A549 (cell line): ENCODE measurements at regions of chr17 and their contacts with region 1.

Region 1: GRCh38 chr17:80008383-80008840 is 27.3 kb downstream of the TBC1D16 start:
- DNase-seq: peak; percentile 77 to 91
- ATAC-seq: peak; percentile 78 to 91
- H3K4me3 ChIP-seq: no peak overlapping the region
- H3K27ac ChIP-seq: peak overlapping the region; percentile 7 to 16; a peak in 3 of 6 replicates
- H3K4me1 ChIP-seq: peaks cover 15% of the 10 kb centered on the region
- CTCF ChIP-seq: peak; percentile 89
- EP300 ChIP-seq: no peak
- POLR2A ChIP-seq: no peak
- RAD21 ChIP-seq: peak; percentile 64 to 65

Region 2: GRCh38 chr17:79612468-79613194 is 395.8 kb before region 1 on chr17:
- CTCF ChIA-PET with region 1: no interaction called
- POLR2A ChIA-PET with region 1: no interaction called
- DNase-seq: peak; percentile 92 to 94
- ATAC-seq: peak; percentile 67 to 89
- H3K4me3 ChIP-seq: no peak overlapping the region
- H3K27ac ChIP-seq: peak overlapping the region; percentile 88 to 95
- H3K4me1 ChIP-seq: peaks cover 37% of the 10 kb centered on the region
- CTCF ChIP-seq: peak; percentile 97
- EP300 ChIP-seq: no peak
- POLR2A ChIP-seq: no peak
- RAD21 ChIP-seq: peak; percentile 96 to 97

Region 3: DNA sequence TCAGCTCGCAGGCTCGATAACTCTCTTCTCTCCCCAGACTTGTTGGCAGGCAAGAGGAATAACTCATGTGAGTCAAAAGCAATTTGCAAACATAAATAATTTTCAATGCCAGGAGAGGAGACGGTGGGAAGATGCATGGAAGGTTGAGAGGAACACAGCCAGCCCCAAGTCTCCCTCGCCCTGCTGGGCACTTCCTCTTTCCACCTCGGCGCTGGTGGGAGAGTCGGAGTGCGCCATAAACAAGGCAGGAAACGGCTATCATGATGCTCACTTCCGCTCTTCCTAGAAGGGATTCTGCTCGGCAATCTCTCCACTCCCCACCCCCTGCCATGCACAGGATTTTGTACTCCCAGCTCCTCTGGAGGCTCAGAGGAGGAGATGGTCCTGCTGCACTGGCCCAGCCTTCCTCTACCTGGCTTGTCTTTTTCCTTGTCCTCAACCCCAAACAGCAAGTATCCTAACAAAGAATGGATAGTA is 182.2 kb before region 1 on chr17:
- CTCF ChIA-PET with region 1: interaction called, 10 read pairs
- POLR2A ChIA-PET with region 1: no interaction called
- DNase-seq: no peak
- ATAC-seq: no peak
- H3K4me3 ChIP-seq: no peak overlapping the region
- H3K27ac ChIP-seq: no peak overlapping the region
- H3K4me1 ChIP-seq: peaks cover 26% of the 10 kb centered on the region
- CTCF ChIP-seq: no peak
- EP300 ChIP-seq: no peak
- POLR2A ChIP-seq: no peak
- RAD21 ChIP-seq: no peak

Region 4: GRCh38 chr17:79947351-79948031 is 60.9 kb before region 1 on chr17:
- CTCF ChIA-PET with region 1: no interaction called
- POLR2A ChIA-PET with region 1: no interaction called
- DNase-seq: no peak
- ATAC-seq: no peak
- H3K4me3 ChIP-seq: no peak overlapping the region
- H3K27ac ChIP-seq: no peak overlapping the region
- H3K4me1 ChIP-seq: no peaks in the 10 kb centered on the region
- CTCF ChIP-seq: no peak
- EP300 ChIP-seq: no peak
- POLR2A ChIP-seq: no peak
- RAD21 ChIP-seq: no peak

Region 5: DNA sequence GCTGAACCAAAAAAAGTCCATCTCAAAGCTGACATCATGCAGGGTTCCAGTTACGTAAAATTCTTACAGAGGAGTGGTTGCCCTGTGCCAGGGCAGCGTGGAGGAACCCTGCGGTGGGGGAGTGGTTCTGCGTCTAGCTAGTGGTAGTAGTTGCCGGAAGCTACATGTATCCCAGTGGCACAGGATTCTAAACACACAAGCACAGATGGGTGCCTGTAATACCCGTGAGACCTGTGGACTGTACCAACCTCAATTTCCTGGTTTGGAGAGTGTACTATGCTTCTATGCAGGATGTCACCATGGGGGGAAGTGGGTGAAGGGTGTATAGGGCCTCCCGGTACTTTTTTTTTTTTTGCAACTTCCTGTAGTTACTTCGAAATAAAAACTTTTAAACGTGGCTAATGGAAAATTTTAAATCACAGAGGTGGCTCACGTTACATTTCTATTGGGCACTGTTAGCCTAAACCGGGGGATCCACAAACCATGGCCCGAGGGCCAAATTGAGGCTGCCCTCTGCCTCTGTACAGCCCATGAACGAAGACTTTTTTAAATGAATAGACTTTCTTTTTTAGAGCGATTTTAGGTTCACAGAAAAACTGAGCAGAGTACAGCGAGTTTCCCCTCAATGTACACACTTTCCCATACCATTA is 11.3 kb before region 1 on chr17:
- CTCF ChIA-PET with region 1: interaction called, 154 read pairs
- POLR2A ChIA-PET with region 1: interaction called, 3 read pairs
- DNase-seq: no peak
- ATAC-seq: no peak
- H3K4me3 ChIP-seq: no peak overlapping the region
- H3K27ac ChIP-seq: peak overlapping the region; percentile 28 to 48; a peak in 3 of 6 replicates
- H3K4me1 ChIP-seq: peaks cover 33% of the 10 kb centered on the region
- CTCF ChIP-seq: no peak
- EP300 ChIP-seq: no peak
- POLR2A ChIP-seq: no peak
- RAD21 ChIP-seq: no peak

Region 6: GRCh38 chr17:80045703-80046102 is 37.3 kb after region 1 on chr17:
- CTCF ChIA-PET with region 1: interaction called, 27 read pairs
- POLR2A ChIA-PET with region 1: no interaction called
- DNase-seq: no peak
- ATAC-seq: no peak
- H3K4me3 ChIP-seq: no peak overlapping the region
- H3K27ac ChIP-seq: no peak overlapping the region
- H3K4me1 ChIP-seq: no peaks in the 10 kb centered on the region
- CTCF ChIP-seq: no peak
- EP300 ChIP-seq: no peak
- POLR2A ChIP-seq: no peak
- RAD21 ChIP-seq: no peak

Region 7: DNA sequence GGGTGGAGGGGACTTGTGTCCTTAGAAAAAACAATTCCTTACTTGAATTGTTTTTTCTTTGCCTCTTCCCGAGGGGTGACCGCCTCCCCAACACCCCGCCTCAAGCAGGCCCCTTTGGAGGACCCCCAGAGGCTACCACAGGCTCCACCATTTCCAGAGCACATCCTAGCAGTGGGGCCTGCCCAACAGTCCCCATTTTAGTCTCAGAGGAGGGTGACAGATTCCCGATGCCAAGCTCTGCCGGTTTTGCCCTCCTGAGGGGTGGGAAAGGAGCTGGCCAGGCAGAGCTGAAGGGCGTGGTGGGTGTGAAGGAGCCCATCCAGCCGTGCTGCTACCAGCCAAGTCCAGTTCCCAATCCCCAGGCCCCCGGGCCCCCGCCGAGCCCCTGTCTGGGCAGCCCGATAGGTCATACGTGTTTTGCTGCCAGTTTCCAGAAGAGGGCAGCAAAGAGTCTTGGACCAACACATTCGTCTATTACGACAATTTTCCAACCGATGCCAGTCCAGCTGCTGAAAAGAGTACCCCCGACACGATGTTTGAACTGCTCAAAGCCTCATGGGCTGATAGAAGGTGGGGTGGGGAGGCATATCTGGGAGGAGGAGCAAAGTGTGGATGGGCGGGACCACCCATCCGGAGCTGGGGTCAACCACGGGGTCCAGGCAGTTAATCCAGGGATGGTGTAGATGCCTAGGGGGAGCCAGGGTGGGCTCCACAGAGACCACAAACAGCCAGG is 74.2 kb after region 1 on chr17:
- CTCF ChIA-PET with region 1: interaction called, 46 read pairs
- POLR2A ChIA-PET with region 1: no interaction called
- DNase-seq: peak; percentile 81 to 89
- ATAC-seq: peak; percentile 79 to 87
- H3K4me3 ChIP-seq: no peak overlapping the region; the same call in 2 of the 3 replicates
- H3K27ac ChIP-seq: peak overlapping the region; percentile 63 to 69
- H3K4me1 ChIP-seq: peaks cover 7% of the 10 kb centered on the region; the same call in 2 of the 3 replicates
- CTCF ChIP-seq: peak; percentile 90
- EP300 ChIP-seq: no peak
- POLR2A ChIP-seq: no peak
- RAD21 ChIP-seq: peak; percentile 84 to 86

Region 8: GRCh38 chr17:80254396-80255251 is 246.2 kb after region 1 on chr17:
- CTCF ChIA-PET with region 1: interaction called, 15 read pairs
- POLR2A ChIA-PET with region 1: no interaction called
- DNase-seq: peak; percentile 97 to 99
- ATAC-seq: peak; percentile 90
- H3K4me3 ChIP-seq: no peak overlapping the region
- H3K27ac ChIP-seq: peak overlapping the region; percentile 94 to 99
- H3K4me1 ChIP-seq: peaks cover 72% of the 10 kb centered on the region
- CTCF ChIP-seq: no peak
- EP300 ChIP-seq: peak; percentile 83 to 92; a peak in 4 of 5 replicates
- POLR2A ChIP-seq: no peak
- RAD21 ChIP-seq: peak in 1 of 2 experiments; percentile 29; a peak in 3 of 5 replicates